Activated naive CD4-positive, alpha-beta T cell treated with anti-CD3 and anti-CD28 coated beads, Interleukin-2, amount 10 ng/mL, durations not matched to agents 7 days and 5 days (primary cell): ENCODE measurements at regions of chr12 and their contacts with region 1.

Region 1: DNA sequence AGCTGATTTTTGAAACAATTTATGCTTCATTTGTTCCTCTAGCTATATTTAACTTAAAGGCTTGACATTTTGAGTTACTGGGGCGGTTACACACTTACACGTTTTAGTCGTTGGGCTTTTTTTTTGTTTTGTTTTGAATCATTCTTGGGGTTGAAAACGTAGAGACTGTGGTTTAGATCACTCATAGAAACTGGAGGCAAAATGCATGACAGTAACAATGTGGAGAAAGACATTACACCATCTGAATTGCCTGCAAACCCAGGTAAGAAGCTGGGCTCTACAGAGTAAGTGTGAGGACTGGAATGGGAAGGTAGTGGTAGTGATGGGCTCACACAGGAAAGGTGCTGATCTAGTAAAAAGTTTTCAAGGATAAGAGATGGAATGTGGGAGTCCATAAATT is at the start of gene CLEC2D:
- DNase-seq: peak; percentile 59
- H3K4me3 Mint-ChIP-seq: peak within 1 kb of the TSS; percentile 82
- H3K27ac Mint-ChIP-seq: peak within 1 kb of the TSS; percentile 95
- H3K4me1 Mint-ChIP-seq: peaks cover 51% of the 10 kb centered on the region
- H3K27me3 Mint-ChIP-seq: no peaks in the 10 kb centered on the region

Region 2: DNA sequence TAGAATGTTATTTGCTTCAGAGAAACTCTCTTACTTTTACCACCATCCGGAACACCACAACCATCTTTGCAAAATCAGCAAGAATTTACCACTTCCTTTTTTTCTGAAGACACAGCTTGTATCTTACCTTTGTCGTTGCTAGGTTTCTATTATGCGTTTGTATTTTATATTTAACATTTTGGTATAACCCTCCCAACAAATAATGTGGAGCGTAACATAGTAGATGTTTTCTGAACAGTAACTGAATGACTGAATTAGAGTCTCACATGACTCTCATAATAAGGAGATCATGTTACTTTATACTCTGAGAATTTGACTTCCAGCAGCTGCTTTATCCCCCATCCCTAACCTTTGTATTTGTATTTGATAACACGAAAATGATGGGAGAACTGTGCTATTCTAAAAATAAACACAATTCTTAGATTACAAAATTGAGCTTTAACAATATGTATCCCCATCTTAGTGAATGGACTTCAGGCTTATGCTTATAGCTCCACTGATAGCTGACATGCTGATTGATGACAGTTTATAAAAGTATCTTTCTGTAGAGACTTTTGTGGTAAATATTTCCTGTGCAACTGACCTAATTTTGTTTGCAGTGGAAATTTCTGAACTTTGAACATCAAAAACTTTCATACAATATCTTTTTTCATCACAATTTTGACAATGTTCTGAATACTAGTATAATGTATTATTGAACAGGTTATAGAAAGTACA is 54.0 kb before region 1 on chr12:
- CTCF ChIA-PET with region 1: no interaction called
- DNase-seq: no peak
- H3K4me3 Mint-ChIP-seq: peak overlapping the region; percentile 61
- H3K27ac Mint-ChIP-seq: peak overlapping the region; percentile 94
- H3K4me1 Mint-ChIP-seq: peaks cover 66% of the 10 kb centered on the region
- H3K27me3 Mint-ChIP-seq: no peaks in the 10 kb centered on the region

Region 3: DNA sequence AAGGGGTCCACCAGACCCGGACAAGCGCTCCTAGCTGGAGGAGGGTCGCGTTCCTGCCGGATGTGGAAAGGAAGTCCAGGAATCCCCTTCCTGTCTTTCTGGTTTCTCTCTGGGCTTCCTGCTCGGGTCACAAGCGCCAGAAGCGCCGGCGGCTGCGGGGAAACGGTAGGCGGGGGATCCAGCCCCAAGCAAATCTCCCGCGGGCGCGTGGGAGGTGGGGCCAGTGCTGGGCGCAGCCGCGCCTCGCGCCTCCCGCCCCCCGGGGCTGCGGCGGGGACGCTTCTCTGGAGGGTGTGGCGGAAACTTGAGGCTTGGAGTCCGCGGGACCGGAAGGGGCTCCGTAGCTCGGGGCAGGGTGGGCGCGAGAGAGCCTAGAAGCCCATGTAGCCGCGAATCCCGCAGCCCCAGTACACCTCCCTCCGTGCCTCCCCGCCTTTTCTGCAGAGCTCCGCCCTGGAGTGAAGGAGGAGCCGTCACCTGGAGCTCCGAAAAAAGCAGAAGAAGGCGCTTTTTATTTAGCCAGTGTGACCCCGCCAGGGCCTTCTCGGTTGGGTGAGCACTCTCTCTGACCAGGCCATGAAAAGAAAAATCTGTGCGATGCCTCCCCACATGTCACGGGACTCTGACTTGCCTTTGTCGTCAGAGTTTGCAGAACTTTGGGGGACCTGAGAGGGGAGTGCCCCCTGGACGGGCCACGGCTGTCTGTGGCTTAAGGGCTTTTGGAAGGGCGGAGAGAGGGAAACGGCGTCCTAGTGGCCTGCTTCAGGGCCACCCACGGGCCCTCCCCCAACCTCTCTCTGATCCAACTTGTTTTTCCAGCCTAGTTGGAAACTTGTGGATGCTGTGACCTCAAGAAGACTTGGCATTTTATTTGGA is 21.5 kb before region 1 on chr12:
- CTCF ChIA-PET with region 1: interaction called, 12 read pairs
- DNase-seq: peak; percentile 97
- H3K4me3 Mint-ChIP-seq: peak overlapping the region; percentile 93
- H3K27ac Mint-ChIP-seq: peak overlapping the region; percentile 96
- H3K4me1 Mint-ChIP-seq: peaks cover 61% of the 10 kb centered on the region
- H3K27me3 Mint-ChIP-seq: peaks cover 10% of the 10 kb centered on the region